ENCODE measurements at regions of chr6 and their contacts with region 1.

Region 1: DNA sequence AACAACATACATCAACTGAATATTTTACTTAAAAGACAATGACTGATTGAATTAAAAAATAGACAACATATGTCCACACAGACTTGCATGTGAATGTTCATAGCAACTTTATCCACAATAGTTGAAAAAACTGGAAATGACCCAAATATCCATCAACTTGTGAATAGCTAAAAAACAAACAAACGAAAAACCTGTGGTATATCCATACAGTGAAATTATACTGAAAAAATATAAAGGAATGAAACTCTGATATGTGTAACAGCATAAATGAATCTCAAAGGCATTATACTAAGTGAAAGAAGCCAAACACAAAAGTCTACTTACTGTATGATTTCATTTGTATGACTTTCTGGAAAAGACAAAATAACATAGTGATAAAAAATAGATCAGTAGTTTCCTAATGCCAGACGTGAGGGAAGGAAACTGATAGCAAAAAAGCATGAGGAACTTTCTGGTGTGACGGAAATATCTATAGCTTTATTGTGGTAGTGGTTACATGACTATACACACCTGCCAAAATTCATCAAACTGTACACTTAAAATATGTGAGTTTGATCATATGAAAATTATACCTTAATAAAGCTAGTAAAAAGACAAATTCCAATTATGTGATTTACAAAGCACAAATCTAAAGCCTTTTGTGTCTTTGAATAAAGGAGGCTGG is 123.2 kb downstream of the BACH2 start:
- DNase-seq: no peak
- ATAC-seq: peak; percentile 19
- H3K4me3 Mint-ChIP-seq: peak overlapping the region; percentile 26
- H3K27ac Mint-ChIP-seq: peak overlapping the region; percentile 83
- H3K4me1 Mint-ChIP-seq: peaks cover 85% of the 10 kb centered on the region
- H3K27me3 Mint-ChIP-seq: no peaks in the 10 kb centered on the region
- CTCF ChIP-seq: no peak

Region 2: GRCh38 chr6:90156861-90157260 is 16.5 kb before region 1 on chr6:
- CTCF ChIA-PET with region 1: interaction called, 7 read pairs
- POLR2A ChIA-PET with region 1: interaction called, 7 read pairs
- intact Hi-C with region 1: loop called (anchors 2 kb)
- DNase-seq: peak; percentile 71
- ATAC-seq: peak; percentile 93
- H3K4me3 Mint-ChIP-seq: peak overlapping the region; percentile 37
- H3K27ac Mint-ChIP-seq: peak overlapping the region; percentile 89
- H3K4me1 Mint-ChIP-seq: peaks cover 85% of the 10 kb centered on the region
- H3K27me3 Mint-ChIP-seq: no peaks in the 10 kb centered on the region
- CTCF ChIP-seq: no peak

Measured in activated CD8-positive, alpha-beta T cell treated with anti-CD3 and anti-CD28 coated beads for 36 hours (primary cell).